Right ventricle myocardium inferior (tissue), 1 donor: ENCODE measurements at regions of chr11 and their contacts with region 1.

Region 1: DNA sequence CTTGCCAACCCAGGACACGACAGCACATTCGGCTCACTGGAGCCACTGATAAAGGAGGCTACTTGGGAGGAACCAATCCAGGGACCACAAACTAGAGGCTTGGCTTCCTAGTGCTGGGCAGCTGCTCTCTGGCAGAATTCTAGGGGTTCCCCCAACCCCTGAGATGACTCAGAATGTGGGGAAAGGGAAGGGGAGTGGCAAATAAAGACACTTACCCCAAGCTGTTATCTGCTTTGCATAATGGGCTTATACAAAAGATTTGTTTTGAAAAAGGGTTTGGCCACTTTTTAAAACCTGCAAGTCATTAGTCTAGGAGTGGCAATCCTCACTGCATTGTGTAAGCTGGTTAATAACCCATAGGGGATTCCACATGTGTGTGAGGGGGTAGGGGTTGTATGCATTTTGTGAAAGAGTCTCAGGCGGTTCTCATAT is 64.1 kb upstream of the LMO1 start:
- DNase-seq: no peak
- ATAC-seq: no peak

Region 2: DNA sequence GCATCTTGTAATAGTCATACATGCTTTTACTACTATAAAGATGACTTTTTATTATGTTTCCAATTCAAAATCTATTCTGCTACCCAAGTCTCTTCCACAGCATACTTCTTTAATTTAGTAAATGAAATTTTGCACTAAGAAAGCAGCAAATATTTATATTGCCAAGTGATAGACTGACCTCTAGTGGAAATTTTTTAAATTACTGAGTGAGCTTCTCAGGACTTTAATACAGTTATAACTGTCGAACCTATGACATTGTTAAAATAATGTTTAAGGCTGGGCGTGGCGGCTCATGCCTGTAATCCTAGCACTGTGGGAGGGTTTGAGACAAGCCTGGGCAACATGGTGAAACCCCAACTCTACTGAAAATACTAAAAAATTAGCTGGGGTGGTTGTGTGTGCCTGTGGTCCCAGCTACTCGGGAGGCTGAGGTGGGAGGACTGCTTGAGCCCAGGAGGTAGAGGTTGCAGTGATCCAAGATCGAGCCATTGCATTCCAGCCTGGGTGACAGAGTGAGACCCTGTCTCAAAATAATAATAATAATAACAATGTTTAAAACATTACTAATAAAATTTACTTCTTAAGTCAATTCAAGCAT is 238.9 kb after region 1 on chr11:
- intact Hi-C with region 1: loop called (anchors 2 kb)
- DNase-seq: no peak
- ATAC-seq: peak; percentile 48